Activated T-helper 1 cell treated with anti-CD3 and anti-CD28 coated beads, Interleukin-12 subunit alpha, Interleukin-12 subunit beta, Interleukin-2, Interleukin-4 antibody, amounts not matched to agents 30 ng/mL and 10 ng/mL and 1 ng/mL, durations not matched to agents 14 hours and 24 hours and 36 hours (primary cell): ENCODE measurements at regions of chr3 and their contacts with region 1.

Region 1: GRCh38 chr3:122101646-122102045 is 46.5 kb downstream of the CD86 start:
- DNase-seq: no peak
- H3K4me3 Mint-ChIP-seq: peak overlapping the region; percentile 47
- H3K27ac Mint-ChIP-seq: peak overlapping the region; percentile 87
- H3K4me1 Mint-ChIP-seq: no peaks in the 10 kb centered on the region
- H3K27me3 Mint-ChIP-seq: no peaks in the 10 kb centered on the region

Region 2: GRCh38 chr3:120587332-120587975 is 1514.2 kb before region 1 on chr3:
- intact Hi-C with region 1: no loop called
- DNase-seq: no peak
- H3K4me3 Mint-ChIP-seq: no peak overlapping the region
- H3K27ac Mint-ChIP-seq: no peak overlapping the region
- H3K4me1 Mint-ChIP-seq: no peaks in the 10 kb centered on the region
- H3K27me3 Mint-ChIP-seq: peaks cover 10% of the 10 kb centered on the region

Region 3: DNA sequence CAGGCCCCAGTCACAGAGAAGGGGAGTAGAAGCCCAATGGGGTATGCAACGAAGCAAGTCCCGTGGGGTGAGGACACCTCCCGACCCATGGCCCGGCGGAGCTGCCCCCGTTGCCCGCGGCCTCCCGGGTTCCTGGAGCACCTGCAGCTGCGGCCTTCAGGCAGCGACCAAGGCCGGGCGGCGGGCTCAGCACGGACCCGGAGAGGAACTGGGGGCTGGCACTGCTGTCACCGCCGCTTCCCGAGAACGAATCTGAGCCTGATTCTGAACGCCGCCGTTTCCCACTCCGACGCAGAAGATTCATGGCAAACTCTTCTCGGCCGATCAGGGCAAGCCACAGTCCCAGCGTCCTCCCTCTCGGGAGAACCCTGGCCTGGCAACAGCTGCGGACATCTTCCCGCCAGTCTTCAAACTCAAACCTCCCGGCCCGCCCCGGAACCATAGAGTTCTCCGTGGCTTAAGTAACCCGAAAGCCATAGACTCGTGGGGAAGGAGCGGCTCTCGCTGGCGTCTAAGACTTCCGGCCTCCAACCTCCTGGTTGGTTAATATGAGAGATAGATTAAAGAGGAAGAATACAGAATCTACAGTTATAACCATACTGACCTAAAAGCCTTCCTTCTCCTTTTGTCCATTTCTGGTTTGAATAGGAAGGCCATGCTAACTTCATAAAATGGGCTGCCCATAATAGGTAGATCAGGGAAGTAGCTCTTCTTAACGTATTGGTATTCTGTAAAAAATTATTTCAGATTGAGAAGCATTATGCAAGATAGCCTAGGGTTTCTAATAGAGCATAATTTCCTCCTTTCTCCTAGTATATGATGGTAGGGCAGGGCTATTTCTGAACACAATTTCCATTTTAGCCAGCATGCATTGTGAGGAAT is 555.8 kb before region 1 on chr3 and contains the start of gene POLQ:
- intact Hi-C with region 1: loop called (anchors 2 kb)
- DNase-seq: peak; percentile 83
- H3K4me3 Mint-ChIP-seq: peak within 1 kb of the TSS; percentile 89
- H3K27ac Mint-ChIP-seq: peak within 1 kb of the TSS; percentile 88
- H3K4me1 Mint-ChIP-seq: peaks cover 32% of the 10 kb centered on the region
- H3K27me3 Mint-ChIP-seq: peaks cover 2% of the 10 kb centered on the region
- total RNA-seq, gene POLQ: 29.0 and 30.1 TPM in 2 replicates

Region 4: DNA sequence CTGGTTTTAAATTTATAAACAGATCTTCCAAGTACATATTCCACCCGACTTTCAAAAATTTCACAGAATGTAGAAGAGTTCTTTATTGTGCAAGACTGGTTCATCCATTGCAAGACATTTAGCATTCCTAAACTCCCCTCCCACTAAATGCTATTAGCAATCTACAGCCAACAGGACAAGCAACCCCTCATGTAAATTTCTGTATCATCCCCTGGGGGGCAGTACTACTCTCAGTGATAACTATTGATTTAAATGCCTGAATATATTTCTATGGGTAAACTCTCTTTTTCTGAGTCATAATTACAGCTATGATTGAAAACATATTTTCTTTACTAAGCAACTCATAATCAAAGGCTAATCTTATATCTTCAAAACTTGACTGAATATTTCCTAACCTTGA is 218.1 kb before region 1 on chr3:
- intact Hi-C with region 1: loop called (anchors 2 kb)
- DNase-seq: no peak
- H3K4me3 Mint-ChIP-seq: no peak overlapping the region
- H3K27ac Mint-ChIP-seq: no peak overlapping the region
- H3K4me1 Mint-ChIP-seq: no peaks in the 10 kb centered on the region
- H3K27me3 Mint-ChIP-seq: no peaks in the 10 kb centered on the region

Region 5: DNA sequence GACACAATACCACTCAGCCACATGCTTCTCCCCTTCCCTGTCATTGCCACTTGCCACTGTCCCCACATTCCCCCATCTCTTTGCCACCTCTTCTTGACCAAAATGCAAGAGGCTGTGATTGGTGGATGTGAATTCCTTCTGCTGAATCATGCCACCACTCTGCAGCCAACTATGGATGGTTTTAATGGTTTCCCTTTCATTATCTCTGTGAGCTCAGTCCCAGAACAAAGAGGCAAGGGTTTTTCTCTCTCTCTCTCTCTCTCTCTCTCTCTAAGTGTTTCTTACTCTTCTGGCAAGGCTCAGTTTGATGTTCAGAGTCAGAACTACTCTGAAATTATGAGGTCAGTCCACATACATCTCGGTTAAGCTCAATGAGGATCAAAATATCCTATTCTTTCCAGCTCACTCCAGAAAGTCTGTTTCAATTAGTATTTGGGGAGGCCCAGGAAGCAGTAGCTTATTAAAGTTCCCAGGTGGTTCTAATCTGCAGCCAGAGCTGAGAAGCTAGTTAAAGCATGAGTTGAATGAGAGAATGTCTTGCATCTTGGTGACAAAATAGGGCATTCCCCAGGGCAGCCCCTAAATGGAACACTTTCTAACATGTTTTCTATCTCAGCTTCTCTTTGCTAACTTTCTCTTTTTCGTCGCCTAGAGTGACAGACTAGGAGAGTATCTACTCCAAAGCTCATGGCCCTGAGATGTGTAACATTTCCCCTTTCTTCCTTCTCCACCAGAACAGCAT is 71.1 kb before region 1 on chr3:
- intact Hi-C with region 1: loop called (anchors 2 kb)
- DNase-seq: peak; percentile 27
- H3K4me3 Mint-ChIP-seq: peak overlapping the region; percentile 20
- H3K27ac Mint-ChIP-seq: peak overlapping the region; percentile 85
- H3K4me1 Mint-ChIP-seq: peaks cover 17% of the 10 kb centered on the region
- H3K27me3 Mint-ChIP-seq: peaks cover 5% of the 10 kb centered on the region

Region 6: DNA sequence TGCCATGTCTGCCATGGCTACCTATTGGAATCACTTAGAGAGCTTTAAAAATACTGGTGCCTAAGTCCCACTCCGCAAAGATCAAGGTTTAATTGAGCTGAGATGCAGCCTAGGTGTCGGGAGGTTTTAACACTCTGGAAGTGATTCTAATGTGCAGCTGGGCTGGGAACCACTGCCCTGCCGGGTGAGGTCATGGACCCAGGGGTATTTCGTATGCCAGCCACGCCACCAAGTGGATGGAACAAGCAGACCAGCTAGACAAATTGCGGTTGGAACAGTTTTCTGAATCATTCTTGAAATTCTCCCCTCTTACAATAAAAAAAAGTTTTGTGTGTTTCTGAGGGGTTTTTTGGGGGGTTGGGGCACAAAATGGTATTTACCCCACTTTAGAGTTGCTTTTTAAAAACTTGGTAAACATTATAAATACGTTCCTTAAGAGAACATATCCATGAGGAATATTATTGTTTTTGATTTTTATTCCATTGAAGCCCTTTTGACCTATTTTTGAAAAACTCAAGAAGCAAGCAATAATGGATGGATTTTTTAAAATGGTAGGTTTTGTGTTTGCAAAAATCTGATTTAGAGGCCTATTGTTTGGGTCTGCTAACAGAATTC is 157.2 kb after region 1 on chr3:
- intact Hi-C with region 1: loop called (anchors 1 kb)
- DNase-seq: peak; percentile 47
- H3K4me3 Mint-ChIP-seq: no peak overlapping the region
- H3K27ac Mint-ChIP-seq: peak overlapping the region; percentile 35
- H3K4me1 Mint-ChIP-seq: peaks cover 22% of the 10 kb centered on the region
- H3K27me3 Mint-ChIP-seq: peaks cover 17% of the 10 kb centered on the region

Region 7: DNA sequence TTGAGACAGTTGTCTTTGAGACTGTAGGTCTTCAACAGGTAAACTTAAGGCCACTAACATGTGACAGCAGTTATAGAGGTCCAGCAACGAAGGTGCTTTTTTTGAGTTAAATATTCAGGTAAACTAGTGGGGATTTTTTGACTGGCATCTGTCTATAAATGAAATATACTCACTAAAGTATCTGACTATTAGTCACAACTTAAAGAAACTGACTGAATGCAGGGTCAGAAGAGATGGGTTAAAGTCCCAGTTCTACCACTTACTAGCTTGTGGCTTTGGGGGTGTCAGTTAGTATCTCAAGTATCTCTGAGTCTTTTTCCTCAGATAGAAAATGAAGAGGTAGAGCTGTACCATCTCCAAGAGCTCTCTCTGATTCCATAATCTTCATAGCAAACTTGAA is 263.4 kb after region 1 on chr3:
- intact Hi-C with region 1: loop called (anchors 1 kb)
- DNase-seq: no peak
- H3K4me3 Mint-ChIP-seq: peak overlapping the region; percentile 42
- H3K27ac Mint-ChIP-seq: peak overlapping the region; percentile 91
- H3K4me1 Mint-ChIP-seq: peaks cover 47% of the 10 kb centered on the region
- H3K27me3 Mint-ChIP-seq: no peaks in the 10 kb centered on the region

Region 8: GRCh38 chr3:122533931-122534334 is 432.3 kb after region 1 on chr3:
- intact Hi-C with region 1: loop called (anchors 10 kb)
- DNase-seq: peak; percentile 46
- H3K4me3 Mint-ChIP-seq: no peak overlapping the region
- H3K27ac Mint-ChIP-seq: peak overlapping the region; percentile 80
- H3K4me1 Mint-ChIP-seq: peaks cover 60% of the 10 kb centered on the region
- H3K27me3 Mint-ChIP-seq: no peaks in the 10 kb centered on the region